Dorsolateral prefrontal cortex (tissue), 120 donors: ENCODE measurements at regions of chr20 and their contacts with region 1.

Region 1: DNA sequence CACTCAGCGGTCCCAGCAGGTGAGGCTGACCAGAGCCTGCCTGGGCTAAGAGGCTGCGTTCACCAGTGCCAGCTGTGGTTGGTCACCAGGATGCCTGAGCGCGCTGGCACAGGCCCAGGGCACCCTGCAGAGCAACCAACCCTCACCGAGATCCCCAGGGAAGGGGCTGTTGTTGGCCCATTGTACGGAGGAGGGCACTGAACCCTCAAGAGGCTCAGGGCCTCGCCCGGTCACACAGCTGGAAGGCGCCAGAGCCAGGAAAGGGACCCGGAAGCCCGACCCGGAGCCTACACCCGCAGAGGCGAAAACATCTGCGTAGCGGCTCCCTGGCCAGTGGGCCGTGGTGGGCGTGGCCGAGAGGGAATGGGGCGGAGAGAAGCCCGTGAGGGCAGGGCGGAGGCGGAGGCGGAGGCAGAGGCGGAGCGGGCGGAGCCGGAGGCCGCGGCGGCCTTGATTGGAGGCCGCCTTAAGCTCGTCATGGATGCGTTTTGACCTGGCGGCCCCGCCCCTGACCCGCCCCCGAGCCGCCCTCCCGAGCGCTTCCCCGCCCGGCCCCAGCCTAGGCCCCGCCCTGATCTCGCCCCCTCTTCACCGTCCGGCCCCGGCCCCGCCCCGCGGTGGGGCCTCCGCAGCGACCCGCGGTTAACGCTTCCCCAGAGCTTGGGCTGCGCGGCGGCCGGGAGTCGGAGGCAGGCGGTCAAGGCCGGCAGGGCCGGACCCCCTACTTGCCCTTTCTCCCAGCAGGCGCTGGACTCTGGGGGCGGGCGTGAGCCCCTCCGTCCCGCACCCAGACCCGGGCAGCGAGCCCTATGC is 2.2 kb upstream of the MRGBP start:
- DNase-seq: peak; percentile 91 to 99 (median 94)
- H3K4me3 ChIP-seq: peak overlapping the region; percentile 39 to 97 (median 76)
- H3K27ac ChIP-seq: peak overlapping the region; percentile 63 to 98 (median 95)
- H3K27me3 ChIP-seq: no peaks in the 10 kb centered on the region
- CTCF ChIP-seq: peak in 28 of 56 donors; percentile 4 to 62 (median 26)

Region 2: GRCh38 chr20:62143118-62143973 is 650.8 kb before region 1 on chr20 and contains the starts of genes PSMA7 and SS18L1:
- intact Hi-C with region 1: loop called in 1 of 2 experiments (anchors 10 kb)
- DNase-seq: peak; percentile 66 to 93 (median 84)
- H3K4me3 ChIP-seq: peak within 1 kb of the TSS; percentile 61 to 98 (median 86)
- H3K27ac ChIP-seq: peak within 1 kb of the TSS in 58 of 59 donors; percentile 57 to 100 (median 94)
- H3K27me3 ChIP-seq: no peaks in the 10 kb centered on the region
- CTCF ChIP-seq: peak in 3 of 56 donors; percentile 12 to 29 (median 13)
- total RNA-seq, gene PSMA7: 92.8 to 154 (median 124) TPM
- total RNA-seq, gene SS18L1: 23.7 to 55.2 (median 35.7) TPM

Region 3: DNA sequence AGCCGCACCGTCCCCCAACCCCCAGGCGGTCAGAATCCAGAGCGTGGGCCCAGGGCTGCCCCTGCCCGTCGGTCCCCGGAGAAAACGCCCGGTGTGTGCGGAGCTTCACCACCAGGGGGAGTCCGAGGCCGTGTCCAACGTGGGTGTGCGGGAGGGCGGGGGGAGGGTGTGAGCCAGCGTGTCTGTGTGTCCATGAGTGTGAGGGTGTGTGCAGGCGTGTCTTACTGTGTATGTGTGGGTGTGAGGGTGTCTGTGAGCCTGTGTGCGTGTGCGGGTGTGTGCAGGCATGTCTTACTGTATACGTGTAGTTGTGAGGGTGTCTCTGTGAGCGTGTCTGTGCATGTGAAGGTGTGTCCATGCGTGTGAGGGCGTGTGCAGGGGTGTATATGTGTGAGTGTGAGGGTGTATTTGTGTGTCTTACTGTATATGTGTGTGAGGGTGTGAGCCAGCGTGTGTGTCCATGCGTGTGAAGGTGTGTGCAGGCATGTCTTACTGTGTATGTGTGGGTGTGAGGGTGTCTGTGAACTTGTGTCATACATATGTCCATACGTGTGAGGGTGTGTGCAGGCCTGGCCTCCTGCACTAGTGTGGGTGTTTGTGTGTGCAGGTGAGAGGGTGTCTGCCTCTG is 293.8 kb before region 1 on chr20:
- intact Hi-C with region 1: loop called (anchors 1 to 5 kb)
- DNase-seq: peak in 9 of 10 donors; percentile 49 to 77 (median 66)
- H3K4me3 ChIP-seq: no peak overlapping the region
- H3K27ac ChIP-seq: no peak overlapping the region
- H3K27me3 ChIP-seq: peaks cover 0 to 18% (median 6%) of the 10 kb centered on the region in 45 donors
- CTCF ChIP-seq: peak; percentile 33 to 88 (median 78)

Region 4: DNA sequence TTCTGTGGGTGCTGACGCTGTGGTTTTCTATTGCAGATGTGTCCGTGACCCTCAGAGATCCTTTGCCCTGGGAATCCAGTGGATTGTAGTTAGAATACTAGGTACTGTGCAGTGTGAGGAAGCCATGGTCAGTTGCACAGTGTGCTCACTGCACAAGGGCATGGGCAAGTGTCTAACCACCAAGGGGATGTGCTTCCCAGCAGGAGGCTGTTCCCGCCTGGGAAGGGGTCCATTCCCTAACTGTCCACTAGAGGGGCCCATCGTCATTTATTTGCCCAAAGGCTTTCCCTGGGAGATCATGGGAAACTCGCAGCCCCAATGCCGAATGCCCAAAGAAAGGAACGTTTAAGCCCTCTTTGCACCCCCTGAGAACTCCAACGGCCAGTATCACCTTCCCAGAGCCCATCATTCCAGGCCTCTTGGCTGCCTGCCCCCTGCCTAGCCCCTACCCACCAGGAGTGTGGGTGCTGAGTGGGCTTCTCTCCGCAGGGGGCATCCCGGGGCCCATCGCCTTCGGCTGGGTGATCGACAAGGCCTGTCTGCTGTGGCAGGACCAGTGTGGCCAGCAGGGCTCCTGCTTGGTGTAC is 125.6 kb before region 1 on chr20:
- intact Hi-C with region 1: loop called (anchors 1 to 2 kb)
- DNase-seq: peak; percentile 58 to 89 (median 84)
- H3K4me3 ChIP-seq: no peak overlapping the region
- H3K27ac ChIP-seq: peak overlapping the region in 12 of 59 donors; percentile 1 to 75 (median 46)
- H3K27me3 ChIP-seq: no peaks in the 10 kb centered on the region
- CTCF ChIP-seq: peak; percentile 71 to 96 (median 91)

Region 5: GRCh38 chr20:62937366-62938104 is 143.4 kb after region 1 on chr20:
- intact Hi-C with region 1: loop called in 1 of 2 experiments (anchors 10 kb)
- DNase-seq: peak; percentile 80 to 95 (median 91)
- H3K4me3 ChIP-seq: peak overlapping the region; percentile 58 to 100 (median 94)
- H3K27ac ChIP-seq: peak overlapping the region; percentile 23 to 97 (median 89)
- H3K27me3 ChIP-seq: no peaks in the 10 kb centered on the region
- CTCF ChIP-seq: peak in 47 of 56 donors; percentile 8 to 69 (median 39)

Region 6: DNA sequence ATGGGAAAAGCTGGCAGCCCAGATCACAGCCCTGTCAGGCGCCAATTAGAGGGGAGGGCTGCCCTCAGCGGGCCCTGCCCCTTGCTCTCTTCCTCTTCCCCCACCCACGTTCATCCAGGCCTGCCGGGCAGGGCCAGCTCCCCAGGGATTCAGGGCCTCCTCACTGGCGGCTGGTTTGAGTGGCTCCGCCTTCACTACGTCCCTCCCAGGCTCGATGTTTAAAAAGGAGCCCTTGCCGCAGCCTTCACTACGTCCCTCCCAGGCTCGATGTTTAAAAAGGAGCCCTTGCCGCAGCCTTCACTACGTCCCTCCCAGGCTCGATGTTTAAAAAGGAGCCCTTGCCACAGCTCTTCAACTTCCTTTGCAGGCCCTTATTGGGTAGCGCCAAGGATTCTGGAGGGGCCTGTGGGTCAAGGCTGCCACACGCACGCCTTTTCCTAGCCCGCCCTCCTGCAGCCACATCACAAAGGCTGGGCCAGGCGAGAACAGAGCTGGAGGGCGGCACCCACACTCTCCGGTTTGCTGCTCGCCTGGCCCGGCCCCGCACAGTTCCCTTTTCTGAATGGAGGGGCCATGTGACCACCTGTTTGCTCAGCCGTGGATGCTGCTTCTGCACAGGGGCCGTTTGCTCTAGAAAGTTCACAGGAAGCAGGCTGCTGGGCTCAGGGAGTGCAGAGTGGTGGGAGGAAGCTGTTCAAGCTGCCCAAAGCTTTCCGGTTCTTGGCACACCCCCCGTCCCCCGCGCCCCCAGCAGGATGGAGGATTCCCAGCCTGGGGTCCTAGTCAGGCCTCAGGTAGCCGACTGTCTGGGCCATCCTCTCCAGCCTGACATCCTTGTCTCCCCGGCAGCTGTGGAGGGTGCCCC is 160.0 kb after region 1 on chr20:
- intact Hi-C with region 1: no loop called
- DNase-seq: peak in 6 of 10 donors; percentile 32 to 72 (median 58)
- H3K4me3 ChIP-seq: peak overlapping the region in 47 of 59 donors; percentile 6 to 57 (median 31)
- H3K27ac ChIP-seq: peak overlapping the region in 53 of 59 donors; percentile 6 to 87 (median 60)
- H3K27me3 ChIP-seq: no peaks in the 10 kb centered on the region
- CTCF ChIP-seq: no peak